Astrocyte of the cerebellum (primary cell): ENCODE measurements at regions of chr9 and their contacts with region 1.

Region 1: DNA sequence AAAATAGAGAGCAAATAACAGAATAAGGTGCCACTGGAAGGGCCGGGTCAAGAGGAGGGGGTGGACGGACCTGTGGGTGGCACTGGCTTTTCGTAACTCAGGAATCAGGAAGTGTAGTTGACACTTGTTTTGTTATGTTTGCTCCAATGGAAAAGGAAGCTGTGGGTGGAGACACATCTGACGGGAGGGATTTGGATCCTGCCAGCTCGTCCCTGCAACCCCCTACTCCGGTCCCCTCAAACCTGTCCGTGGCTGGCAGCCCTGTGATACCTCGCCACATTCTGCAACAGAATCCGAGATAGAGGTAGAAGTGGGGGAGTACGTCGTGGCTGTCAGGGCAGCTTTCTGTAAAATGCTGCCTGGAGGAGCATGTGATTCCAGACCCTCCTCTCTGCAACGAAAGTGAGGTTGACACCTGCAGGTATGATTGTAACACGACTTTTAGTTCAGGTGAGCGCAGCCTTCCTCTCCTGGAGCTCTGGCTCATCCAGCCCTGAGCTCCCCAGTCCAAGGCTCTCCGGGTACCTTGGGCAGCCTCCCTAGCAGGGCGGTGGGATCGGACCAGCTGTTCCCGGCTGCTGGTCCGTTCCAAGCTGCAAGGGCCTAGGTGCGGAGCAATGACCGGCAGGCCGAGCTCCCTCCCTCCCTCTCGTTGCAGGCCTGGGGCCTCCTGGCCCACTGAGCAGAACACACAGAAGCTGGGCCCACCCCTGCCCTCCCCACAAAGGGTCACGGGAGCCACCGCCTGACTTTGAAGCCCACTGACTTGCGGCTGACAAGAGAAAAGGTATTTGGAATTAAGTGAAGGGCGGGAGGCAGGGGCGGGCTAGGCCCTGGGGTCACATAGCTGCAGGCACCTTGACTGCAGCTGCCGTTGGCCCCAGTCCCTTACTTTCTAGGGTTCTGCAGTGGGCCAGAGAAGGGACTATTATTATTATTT is 104.5 kb upstream of the IER5L start:
- DNase-seq: no peak
- H3K4me3 ChIP-seq: no peak overlapping the region
- CTCF ChIP-seq: no peak

Region 2: DNA sequence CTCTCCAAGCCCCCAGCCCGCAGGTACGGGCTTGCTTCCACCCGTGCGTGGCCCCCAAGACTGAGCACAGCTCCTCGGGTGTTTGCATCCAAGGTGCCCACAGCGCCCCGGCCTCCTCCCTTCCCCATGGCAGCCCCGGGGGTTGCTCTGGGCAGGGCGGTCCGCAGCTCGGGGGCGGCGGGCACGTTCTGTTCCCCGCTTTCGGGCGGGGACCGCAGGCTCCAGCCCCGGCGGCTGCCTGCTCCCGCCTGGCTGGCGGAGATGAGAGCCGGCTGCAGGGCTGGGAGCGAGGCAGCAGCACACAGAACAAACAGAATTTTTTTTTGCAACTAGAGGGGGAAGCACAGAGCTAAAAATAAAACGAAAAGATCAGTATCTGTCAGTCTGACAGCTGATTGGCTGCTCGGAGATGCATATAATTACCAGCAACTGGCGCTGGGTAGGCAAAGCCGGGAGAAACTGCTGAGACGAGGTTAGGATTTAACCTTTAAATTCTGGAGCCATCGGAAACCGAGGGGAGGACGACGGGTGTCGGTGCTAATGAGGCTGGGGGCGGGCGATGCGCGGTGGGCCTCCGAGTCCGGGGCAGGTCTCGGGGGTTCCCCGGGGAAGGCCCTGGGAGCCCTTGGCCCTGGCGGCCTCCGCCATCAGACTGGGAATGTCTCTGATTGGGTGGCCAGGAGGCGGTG is 38.2 kb after region 1 on chr9:
- in situ Hi-C with region 1: loop called (anchors 5 kb)
- DNase-seq: peak; percentile 36
- H3K4me3 ChIP-seq: peak overlapping the region; percentile 11
- CTCF ChIP-seq: peak; percentile 6